Activated CD4-positive, alpha-beta memory T cell treated with anti-CD3 and anti-CD28 coated beads for 36 hours (primary cell): ENCODE measurements at regions of chr11 and their contacts with region 1.

Region 1: DNA sequence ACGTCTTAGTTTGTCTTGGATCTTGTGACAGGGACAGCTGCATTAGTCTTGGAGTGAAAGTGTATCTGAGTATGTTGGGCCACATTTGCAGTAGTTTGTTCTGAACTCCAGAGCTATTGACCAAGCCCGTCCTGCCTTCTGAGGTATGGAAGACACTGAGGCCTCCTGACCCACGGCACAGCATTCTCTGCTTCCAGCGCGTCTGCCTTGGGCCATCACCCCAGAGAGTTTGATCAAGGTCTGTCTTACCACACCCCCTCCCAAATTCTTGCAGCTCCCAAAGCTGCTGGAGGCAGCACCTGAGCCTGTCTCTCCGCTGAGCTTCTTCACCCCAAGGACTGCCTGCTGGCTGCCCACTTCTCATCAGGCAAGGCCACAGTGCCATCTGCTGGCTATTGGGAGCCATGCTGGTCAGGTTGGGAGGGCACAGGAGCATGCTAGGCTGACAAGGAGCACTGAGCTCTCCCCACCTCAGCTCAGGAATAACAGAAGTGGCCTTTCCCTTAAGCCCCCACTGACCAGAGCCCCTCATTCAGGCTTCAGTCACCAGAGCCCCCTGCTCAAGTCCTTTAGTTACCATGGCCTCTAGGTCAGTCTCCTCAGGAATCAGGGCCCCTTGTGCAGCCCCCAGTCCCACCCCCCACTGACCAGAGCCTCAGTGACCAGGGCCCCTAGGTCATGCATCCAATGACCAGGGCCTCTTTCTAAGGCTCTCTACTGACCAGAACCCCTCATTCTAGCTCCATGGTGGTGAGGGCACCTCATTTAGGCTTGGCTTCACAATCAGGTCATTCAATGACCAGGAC is 27.2 kb upstream of the SMPD1 start:
- DNase-seq: peak; percentile 85
- H3K4me3 Mint-ChIP-seq: no peak overlapping the region
- H3K27ac Mint-ChIP-seq: no peak overlapping the region
- H3K4me1 Mint-ChIP-seq: peaks cover 3% of the 10 kb centered on the region
- H3K27me3 Mint-ChIP-seq: no peaks in the 10 kb centered on the region

Region 2: DNA sequence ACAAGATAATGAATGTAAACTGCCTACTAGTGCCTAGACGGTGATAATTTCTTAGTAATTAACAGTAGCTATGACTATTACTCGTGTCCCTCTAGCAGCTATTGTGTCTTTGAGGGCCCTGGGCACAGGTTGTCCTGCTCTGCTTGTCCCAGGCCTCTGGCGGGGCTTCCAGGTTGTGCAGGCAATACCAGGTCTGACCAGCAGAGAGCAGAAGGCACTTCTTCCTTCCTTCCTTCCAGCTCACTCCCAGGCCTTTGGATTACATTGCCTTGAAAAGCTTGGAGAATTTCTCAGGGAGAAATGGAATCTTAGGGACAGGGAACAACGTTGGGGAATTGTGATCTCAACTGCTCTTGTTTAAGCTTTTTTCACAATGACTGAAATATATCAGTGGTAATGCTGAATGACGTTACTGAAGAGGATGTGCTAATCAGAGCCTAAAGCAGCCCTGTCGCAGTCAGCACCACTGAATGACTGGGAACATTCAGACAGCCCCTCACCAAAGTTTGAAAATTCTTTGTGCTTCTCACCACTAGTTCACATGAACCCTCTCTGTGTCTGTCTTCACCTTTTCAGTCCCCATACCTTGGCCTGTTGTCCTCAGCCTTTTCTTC is 111.8 kb before region 1 on chr11:
- CTCF ChIA-PET with region 1: interaction called, 183 read pairs
- POLR2A ChIA-PET with region 1: no interaction called
- intact Hi-C with region 1: no loop called
- DNase-seq: peak; percentile 74
- H3K4me3 Mint-ChIP-seq: no peak overlapping the region
- H3K27ac Mint-ChIP-seq: no peak overlapping the region
- H3K4me1 Mint-ChIP-seq: no peaks in the 10 kb centered on the region
- H3K27me3 Mint-ChIP-seq: no peaks in the 10 kb centered on the region

Region 3: GRCh38 chr11:6283453-6284023 is 79.5 kb before region 1 on chr11:
- CTCF ChIA-PET with region 1: interaction called, 13 read pairs
- POLR2A ChIA-PET with region 1: no interaction called
- intact Hi-C with region 1: no loop called
- DNase-seq: no peak
- H3K4me3 Mint-ChIP-seq: no peak overlapping the region
- H3K27ac Mint-ChIP-seq: no peak overlapping the region
- H3K4me1 Mint-ChIP-seq: no peaks in the 10 kb centered on the region
- H3K27me3 Mint-ChIP-seq: peaks cover 27% of the 10 kb centered on the region

Region 4: GRCh38 chr11:6315811-6316425 is 47.2 kb before region 1 on chr11:
- CTCF ChIA-PET with region 1: interaction called, 21 read pairs
- POLR2A ChIA-PET with region 1: no interaction called
- intact Hi-C with region 1: no loop called
- DNase-seq: peak; percentile 53
- H3K4me3 Mint-ChIP-seq: no peak overlapping the region
- H3K27ac Mint-ChIP-seq: no peak overlapping the region
- H3K4me1 Mint-ChIP-seq: peaks cover 16% of the 10 kb centered on the region
- H3K27me3 Mint-ChIP-seq: peaks cover 32% of the 10 kb centered on the region

Region 5: DNA sequence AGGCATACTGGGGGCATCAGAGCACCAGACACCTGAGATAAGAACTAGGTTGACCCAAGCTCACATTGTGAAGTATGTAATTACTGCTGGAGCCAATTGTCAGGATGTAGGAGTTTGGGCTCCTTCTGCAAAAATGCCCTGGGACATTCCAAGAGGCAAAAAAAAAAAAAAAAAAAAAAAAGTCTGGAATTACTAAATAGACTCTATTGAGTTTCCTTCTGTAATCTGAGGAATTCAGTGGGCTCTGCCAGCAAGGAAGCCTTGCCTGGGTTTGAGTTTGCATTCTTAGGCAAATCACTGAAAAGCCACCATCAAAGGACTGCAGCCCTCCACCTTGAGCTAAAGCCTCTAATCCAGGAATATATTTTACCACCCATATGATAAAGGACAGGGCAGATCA is 34.8 kb before region 1 on chr11:
- CTCF ChIA-PET with region 1: interaction called, 23 read pairs
- POLR2A ChIA-PET with region 1: no interaction called
- intact Hi-C with region 1: no loop called
- DNase-seq: no peak
- H3K4me3 Mint-ChIP-seq: no peak overlapping the region
- H3K27ac Mint-ChIP-seq: no peak overlapping the region
- H3K4me1 Mint-ChIP-seq: peaks cover 4% of the 10 kb centered on the region
- H3K27me3 Mint-ChIP-seq: peaks cover 13% of the 10 kb centered on the region

Region 6: GRCh38 chr11:6389921-6390724 is 27.0 kb after region 1 on chr11 and contains the start of gene SMPD1:
- CTCF ChIA-PET with region 1: interaction called, 11 read pairs
- POLR2A ChIA-PET with region 1: no interaction called
- intact Hi-C with region 1: no loop called
- DNase-seq: peak; percentile 96
- H3K4me3 Mint-ChIP-seq: peak within 1 kb of the TSS; percentile 85
- H3K27ac Mint-ChIP-seq: peak within 1 kb of the TSS; percentile 94
- H3K4me1 Mint-ChIP-seq: peaks cover 45% of the 10 kb centered on the region
- H3K27me3 Mint-ChIP-seq: no peaks in the 10 kb centered on the region
- total RNA-seq, gene SMPD1: 23.4 to 23.8 TPM

Region 7: GRCh38 chr11:6443269-6444003 is 80.4 kb after region 1 on chr11:
- CTCF ChIA-PET with region 1: interaction called, 32 read pairs
- POLR2A ChIA-PET with region 1: no interaction called
- intact Hi-C with region 1: no loop called
- DNase-seq: peak; percentile 66
- H3K4me3 Mint-ChIP-seq: no peak overlapping the region
- H3K27ac Mint-ChIP-seq: no peak overlapping the region
- H3K4me1 Mint-ChIP-seq: no peaks in the 10 kb centered on the region
- H3K27me3 Mint-ChIP-seq: no peaks in the 10 kb centered on the region

Region 8: DNA sequence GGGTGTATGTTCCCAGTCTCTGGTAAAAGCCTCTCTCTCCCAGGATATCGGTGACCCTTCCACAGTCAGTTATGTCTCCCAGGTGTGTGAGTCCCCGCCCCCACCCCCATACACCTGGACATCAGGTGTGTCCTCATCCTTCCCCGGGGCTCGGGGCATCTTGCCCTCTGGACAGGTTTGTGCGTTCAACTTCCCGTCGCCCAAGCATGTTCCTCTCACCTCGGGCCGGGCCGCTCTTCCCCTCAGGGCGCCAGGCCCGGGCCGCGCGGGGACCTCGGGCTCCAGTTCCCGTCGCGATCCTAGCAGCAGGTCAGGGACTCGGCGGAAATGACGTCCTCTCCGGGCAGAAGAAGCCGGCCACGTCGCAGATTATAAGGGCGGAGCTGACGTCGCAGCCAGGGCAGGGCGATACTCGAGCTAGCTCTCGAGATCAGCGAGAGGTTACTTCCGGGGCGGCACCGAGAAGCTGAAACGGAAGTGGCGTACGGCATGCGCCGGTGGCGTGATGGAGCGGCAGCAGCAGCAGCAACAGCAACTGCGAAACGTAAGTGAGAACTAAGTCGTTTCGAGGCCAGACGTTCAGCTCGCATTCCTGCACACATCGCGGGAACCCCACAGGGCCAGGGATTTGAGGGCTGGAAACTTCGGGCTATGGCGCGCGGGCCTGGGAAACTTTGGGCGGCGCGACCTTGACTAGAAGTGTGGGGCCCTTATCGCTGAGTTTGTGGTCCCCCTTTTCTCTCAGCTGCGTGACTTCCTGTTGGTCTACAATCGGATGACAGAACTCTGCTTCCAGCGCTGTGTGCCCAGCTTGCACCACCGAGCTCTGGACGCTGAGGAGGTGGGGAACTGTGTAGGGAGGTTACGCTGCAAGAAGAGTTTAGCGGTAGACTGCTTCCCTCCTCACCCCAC is 118.2 kb after region 1 on chr11 and contains the starts of genes ARFIP2 and TIMM10B:
- CTCF ChIA-PET with region 1: no interaction called
- POLR2A ChIA-PET with region 1: no interaction called
- intact Hi-C with region 1: no loop called
- DNase-seq: peak; percentile 99
- H3K4me3 Mint-ChIP-seq: peak within 1 kb of the TSS; percentile 91
- H3K27ac Mint-ChIP-seq: peak within 1 kb of the TSS; percentile 96
- H3K4me1 Mint-ChIP-seq: peaks cover 35% of the 10 kb centered on the region
- H3K27me3 Mint-ChIP-seq: no peaks in the 10 kb centered on the region
- total RNA-seq, gene ARFIP2: 35.1 to 37.8 TPM
- total RNA-seq, gene TIMM10B: 40.2 to 41.3 TPM

Region 9: GRCh38 chr11:6586434-6587359 is 223.6 kb after region 1 on chr11:
- CTCF ChIA-PET with region 1: no interaction called
- POLR2A ChIA-PET with region 1: no interaction called
- intact Hi-C with region 1: no loop called
- DNase-seq: no peak
- H3K4me3 Mint-ChIP-seq: no peak overlapping the region
- H3K27ac Mint-ChIP-seq: no peak overlapping the region
- H3K4me1 Mint-ChIP-seq: no peaks in the 10 kb centered on the region
- H3K27me3 Mint-ChIP-seq: no peaks in the 10 kb centered on the region